Activated B cell treated with CpG ODN at 0.5 μM for 24 hours (primary cell): ENCODE measurements at regions of chr3 and their contacts with region 1.

Region 1: GRCh38 chr3:158830391-158830790 is 28.5 kb downstream of the MFSD1 start:
- DNase-seq: no peak
- ATAC-seq: no peak
- H3K4me3 Mint-ChIP-seq: no peak overlapping the region
- H3K27ac Mint-ChIP-seq: no peak overlapping the region
- H3K4me1 Mint-ChIP-seq: no peaks in the 10 kb centered on the region
- H3K27me3 Mint-ChIP-seq: no peaks in the 10 kb centered on the region
- CTCF ChIP-seq: no peak

Region 2: GRCh38 chr3:158544811-158545210 is 285.6 kb before region 1 on chr3:
- CTCF ChIA-PET with region 1: no interaction called
- POLR2A ChIA-PET with region 1: no interaction called
- intact Hi-C with region 1: no loop called
- DNase-seq: no peak
- ATAC-seq: no peak
- H3K4me3 Mint-ChIP-seq: no peak overlapping the region
- H3K27ac Mint-ChIP-seq: no peak overlapping the region
- H3K4me1 Mint-ChIP-seq: no peaks in the 10 kb centered on the region
- H3K27me3 Mint-ChIP-seq: no peaks in the 10 kb centered on the region
- CTCF ChIP-seq: no peak

Region 3: GRCh38 chr3:160554980-160555379 is 1724.6 kb after region 1 on chr3:
- CTCF ChIA-PET with region 1: no interaction called
- POLR2A ChIA-PET with region 1: no interaction called
- intact Hi-C with region 1: loop called (anchors 5 kb)
- DNase-seq: no peak
- ATAC-seq: no peak
- H3K4me3 Mint-ChIP-seq: no peak overlapping the region
- H3K27ac Mint-ChIP-seq: no peak overlapping the region
- H3K4me1 Mint-ChIP-seq: peaks cover 61% of the 10 kb centered on the region
- H3K27me3 Mint-ChIP-seq: no peaks in the 10 kb centered on the region
- CTCF ChIP-seq: no peak